ENCODE measurements at regions of chr1 and their contacts with region 1.

Region 1: GRCh38 chr1:58515794-58516401 is 30.6 kb downstream of the OMA1 start:
- DNase-seq: no peak
- H3K4me3 Mint-ChIP-seq: no peak overlapping the region
- H3K27ac Mint-ChIP-seq: no peak overlapping the region
- H3K4me1 Mint-ChIP-seq: peaks cover 16% of the 10 kb centered on the region
- H3K27me3 Mint-ChIP-seq: no peaks in the 10 kb centered on the region

Region 2: DNA sequence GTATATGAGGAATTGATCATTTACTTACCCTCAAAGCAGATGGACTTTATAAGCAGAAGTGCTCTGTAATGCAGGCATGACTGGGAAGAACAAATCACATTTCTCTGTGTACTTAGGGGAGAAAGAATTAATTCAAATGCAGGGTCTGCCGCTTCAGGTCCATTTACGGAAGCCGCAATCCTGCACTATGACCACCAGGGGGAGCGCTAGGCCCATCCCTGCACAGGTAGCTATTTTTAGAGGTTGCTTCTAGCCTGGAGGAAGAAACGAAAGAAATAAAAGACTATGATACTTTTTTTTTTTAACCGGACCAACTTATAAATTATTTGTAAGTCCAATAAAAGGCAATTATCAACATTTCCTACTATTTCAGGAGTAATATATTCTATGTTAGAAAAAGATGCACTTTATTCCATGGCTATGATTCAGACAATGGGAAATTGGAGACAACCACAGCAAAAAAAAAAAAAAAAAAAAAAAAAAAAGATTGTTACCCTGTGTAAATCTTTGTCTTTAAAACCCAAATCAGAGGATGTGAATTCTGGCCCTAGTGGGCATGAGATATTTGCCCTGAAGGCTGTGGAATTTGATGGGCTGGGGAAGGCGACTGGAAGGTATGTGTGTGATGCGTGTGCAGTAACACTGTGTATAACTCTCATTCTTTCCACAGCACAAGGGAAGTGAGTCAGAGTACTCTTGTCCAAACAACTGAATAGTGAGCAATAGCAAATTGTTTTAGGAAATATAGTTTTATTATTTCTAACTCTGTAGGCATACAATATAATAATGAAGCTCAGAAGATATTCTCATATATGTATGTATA is 1683.8 kb before region 1 on chr1:
- intact Hi-C with region 1: loop called (anchors 10 kb)
- DNase-seq: peak; percentile 47
- H3K4me3 Mint-ChIP-seq: no peak overlapping the region
- H3K27ac Mint-ChIP-seq: no peak overlapping the region
- H3K4me1 Mint-ChIP-seq: no peaks in the 10 kb centered on the region
- H3K27me3 Mint-ChIP-seq: peaks cover 1% of the 10 kb centered on the region

Region 3: DNA sequence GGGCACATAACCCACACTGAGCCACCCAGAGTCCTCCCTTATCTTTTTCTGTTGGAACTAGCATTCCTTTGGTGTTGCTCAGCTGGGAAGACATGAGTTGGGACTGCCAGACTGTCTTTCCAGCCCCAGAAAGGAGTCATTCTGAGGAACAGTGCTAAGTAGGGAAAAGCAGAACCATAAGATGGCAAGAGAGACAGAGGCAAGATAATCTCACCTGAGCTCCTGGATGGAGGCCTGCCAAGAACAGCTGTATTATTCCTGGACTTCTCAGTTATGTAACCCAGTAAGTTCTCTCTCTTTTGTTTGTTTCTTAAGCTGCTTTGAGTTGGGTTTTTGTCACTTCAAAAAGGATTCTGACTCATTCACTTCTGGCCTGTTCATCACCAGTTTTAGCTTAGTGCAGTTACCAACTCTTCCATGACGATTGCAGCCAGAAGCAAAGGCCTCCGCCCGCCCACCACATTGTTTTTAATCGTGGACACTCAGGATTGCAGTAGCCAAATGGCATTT is 103.8 kb before region 1 on chr1:
- intact Hi-C with region 1: no loop called
- DNase-seq: no peak
- H3K4me3 Mint-ChIP-seq: no peak overlapping the region
- H3K27ac Mint-ChIP-seq: no peak overlapping the region
- H3K4me1 Mint-ChIP-seq: no peaks in the 10 kb centered on the region
- H3K27me3 Mint-ChIP-seq: no peaks in the 10 kb centered on the region

Region 4: GRCh38 chr1:58573705-58574591 is 58.0 kb after region 1 on chr1:
- intact Hi-C with region 1: loop called (anchors 2 kb)
- DNase-seq: peak; percentile 67
- H3K4me3 Mint-ChIP-seq: peak overlapping the region; percentile 41
- H3K27ac Mint-ChIP-seq: peak overlapping the region; percentile 26
- H3K4me1 Mint-ChIP-seq: peaks cover 44% of the 10 kb centered on the region
- H3K27me3 Mint-ChIP-seq: peaks cover 74% of the 10 kb centered on the region

Region 5: DNA sequence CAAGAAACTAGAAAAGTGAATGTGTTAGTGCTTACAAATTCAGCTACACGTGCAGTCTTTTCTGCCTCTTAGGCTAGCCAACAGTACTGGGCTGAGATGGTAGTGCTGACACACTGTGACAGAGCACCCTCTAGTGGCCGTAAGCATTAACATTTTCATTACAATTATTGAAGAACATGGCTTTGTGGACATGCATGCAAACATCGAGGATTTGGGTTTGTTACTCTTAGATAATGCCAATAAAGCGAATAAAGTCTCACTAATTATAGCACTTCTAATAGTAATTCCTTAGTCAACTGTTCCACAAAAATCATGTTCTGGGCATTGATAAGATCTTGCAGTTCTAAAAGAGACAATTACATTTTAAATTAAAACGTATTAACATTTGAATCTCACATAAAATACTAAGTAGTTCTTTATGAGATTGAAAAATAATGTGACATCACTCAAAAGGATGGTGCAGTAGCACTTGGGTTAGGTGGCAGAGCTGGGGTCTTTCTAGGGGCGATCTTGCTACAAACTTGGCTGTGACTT is 136.8 kb after region 1 on chr1:
- intact Hi-C with region 1: loop called (anchors 1 kb)
- DNase-seq: peak; percentile 43
- H3K4me3 Mint-ChIP-seq: no peak overlapping the region
- H3K27ac Mint-ChIP-seq: no peak overlapping the region
- H3K4me1 Mint-ChIP-seq: peaks cover 7% of the 10 kb centered on the region
- H3K27me3 Mint-ChIP-seq: no peaks in the 10 kb centered on the region

Region 6: GRCh38 chr1:59759156-59759925 is 1243.4 kb after region 1 on chr1:
- intact Hi-C with region 1: loop called (anchors 1 kb)
- DNase-seq: peak; percentile 63
- H3K4me3 Mint-ChIP-seq: peak overlapping the region; percentile 13
- H3K27ac Mint-ChIP-seq: no peak overlapping the region
- H3K4me1 Mint-ChIP-seq: peaks cover 12% of the 10 kb centered on the region
- H3K27me3 Mint-ChIP-seq: no peaks in the 10 kb centered on the region

Region 7: DNA sequence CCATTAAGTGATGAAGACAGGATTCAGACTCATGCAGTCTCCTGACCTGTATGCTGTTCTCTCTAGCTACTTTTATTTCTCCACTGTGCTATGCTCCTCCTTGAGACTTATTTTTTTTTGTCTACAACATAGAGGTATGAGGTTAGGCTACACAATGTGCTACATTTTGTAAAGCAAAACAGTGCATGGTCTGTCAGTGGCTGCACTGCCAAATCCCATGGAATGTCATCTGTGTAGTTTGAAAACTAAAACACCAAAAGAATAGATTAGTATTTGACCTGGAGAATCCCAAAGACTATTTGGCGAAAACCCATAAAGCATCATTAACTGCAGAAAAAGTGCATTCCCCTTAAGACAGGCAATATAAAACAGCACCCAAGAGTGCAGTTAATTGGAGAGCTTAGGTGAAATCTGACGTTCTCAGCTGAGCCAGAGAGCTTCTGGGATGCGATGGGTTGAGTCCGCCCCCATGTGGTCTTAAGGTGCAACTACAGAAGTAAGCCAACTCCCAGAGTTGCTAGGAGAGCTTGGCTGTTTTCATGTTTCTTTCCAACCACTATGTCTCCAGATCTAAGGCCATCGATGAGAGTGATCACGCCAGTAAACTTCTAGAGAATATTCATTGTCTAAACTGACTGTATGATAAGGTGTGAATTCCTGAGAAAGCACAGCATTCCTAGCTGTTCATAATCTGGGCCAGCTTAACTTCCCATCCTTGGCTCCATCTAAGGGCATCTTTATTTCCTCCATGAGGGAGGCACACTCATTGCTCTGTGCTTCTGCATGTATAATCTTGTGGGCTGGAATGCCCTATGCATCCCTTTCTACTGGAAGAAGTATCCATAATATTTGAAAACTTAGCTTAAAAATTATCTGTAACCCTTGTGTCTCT is 1431.4 kb after region 1 on chr1:
- intact Hi-C with region 1: loop called (anchors 10 kb)
- DNase-seq: peak; percentile 24
- H3K4me3 Mint-ChIP-seq: no peak overlapping the region
- H3K27ac Mint-ChIP-seq: no peak overlapping the region
- H3K4me1 Mint-ChIP-seq: no peaks in the 10 kb centered on the region
- H3K27me3 Mint-ChIP-seq: peaks cover 13% of the 10 kb centered on the region

Measured in activated T-helper 1 cell treated with anti-CD3 and anti-CD28 coated beads, Interleukin-12 subunit alpha, Interleukin-12 subunit beta, Interleukin-2, Interleukin-4 antibody, amounts not matched to agents 30 ng/mL and 10 ng/mL and 1 ng/mL, durations not matched to agents 14 hours and 24 hours and 36 hours (primary cell).